PC-9 (cell line): ENCODE measurements at regions of chr6 and their contacts with region 1.

Region 1: DNA sequence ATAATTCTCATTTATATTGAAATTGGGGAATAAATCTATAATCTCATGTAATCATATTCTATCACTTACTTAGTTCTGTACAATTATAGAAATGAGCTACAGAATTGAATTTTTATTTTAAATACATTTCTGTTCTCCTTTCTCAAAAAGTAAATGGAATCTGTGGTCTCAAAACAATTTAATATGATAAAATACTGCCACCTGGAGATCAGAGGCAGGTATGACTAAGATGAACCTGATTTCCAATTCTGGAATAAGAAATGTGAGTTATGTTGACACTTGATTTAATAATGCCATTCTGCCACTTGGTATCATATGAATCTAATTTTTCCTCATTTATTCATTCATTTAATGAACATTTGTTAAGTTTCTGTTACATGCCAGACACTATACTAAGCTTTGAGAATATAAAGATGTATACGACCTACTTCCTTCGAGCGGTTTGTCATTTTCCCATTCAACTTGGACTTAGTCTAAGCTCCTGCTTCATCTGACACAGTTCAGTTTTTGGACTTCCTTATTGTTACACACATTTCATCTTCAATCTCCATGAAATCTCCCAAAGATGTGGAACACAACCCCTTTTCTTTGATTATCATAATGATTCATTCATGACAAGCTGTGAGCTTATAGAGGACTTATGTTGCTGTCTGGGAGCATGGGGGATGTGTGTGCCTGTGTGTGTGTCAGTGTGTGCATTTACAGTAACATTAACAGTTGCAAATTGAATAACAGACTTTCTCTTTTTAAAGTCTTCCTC is 7.5 kb upstream of the CCDC28A start:
- DNase-seq: peak in 1 of 2 experiments; percentile 60
- H3K4me3 ChIP-seq: no peak overlapping the region
- H3K27ac ChIP-seq: no peak overlapping the region
- H3K4me1 ChIP-seq: no peaks in the 10 kb centered on the region
- H3K27me3 ChIP-seq: no peaks in the 10 kb centered on the region
- CTCF ChIP-seq: peak; percentile 95

Region 2: DNA sequence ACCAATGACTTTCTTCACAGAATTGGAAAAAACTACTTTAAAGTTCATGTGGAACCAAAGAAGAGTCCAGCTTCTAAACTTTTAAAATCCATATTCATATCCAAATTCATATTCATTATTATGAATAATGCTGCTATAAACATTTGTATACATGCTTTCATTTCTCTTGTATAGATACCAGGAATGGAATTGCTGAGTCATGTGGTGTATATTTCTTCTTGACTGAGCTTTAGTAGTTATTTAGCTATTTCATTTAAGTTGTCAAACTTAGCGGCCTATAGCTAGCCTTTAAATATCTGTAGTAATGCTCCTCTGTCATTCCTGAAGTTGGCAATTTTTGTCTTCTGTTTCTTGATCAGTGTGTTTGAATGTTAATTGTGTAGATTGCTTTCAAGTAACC is 408.1 kb before region 1 on chr6:
- CTCF ChIA-PET with region 1: no interaction called
- POLR2A ChIA-PET with region 1: no interaction called
- intact Hi-C with region 1: no loop called
- DNase-seq: no peak
- H3K4me3 ChIP-seq: no peak overlapping the region
- H3K27ac ChIP-seq: no peak overlapping the region
- H3K4me1 ChIP-seq: 0 out of 2 replicates have a peak, but pooled peaks cover 4% of the 10 kb centered on the region
- H3K27me3 ChIP-seq: no peaks in the 10 kb centered on the region
- CTCF ChIP-seq: no peak

Region 3: DNA sequence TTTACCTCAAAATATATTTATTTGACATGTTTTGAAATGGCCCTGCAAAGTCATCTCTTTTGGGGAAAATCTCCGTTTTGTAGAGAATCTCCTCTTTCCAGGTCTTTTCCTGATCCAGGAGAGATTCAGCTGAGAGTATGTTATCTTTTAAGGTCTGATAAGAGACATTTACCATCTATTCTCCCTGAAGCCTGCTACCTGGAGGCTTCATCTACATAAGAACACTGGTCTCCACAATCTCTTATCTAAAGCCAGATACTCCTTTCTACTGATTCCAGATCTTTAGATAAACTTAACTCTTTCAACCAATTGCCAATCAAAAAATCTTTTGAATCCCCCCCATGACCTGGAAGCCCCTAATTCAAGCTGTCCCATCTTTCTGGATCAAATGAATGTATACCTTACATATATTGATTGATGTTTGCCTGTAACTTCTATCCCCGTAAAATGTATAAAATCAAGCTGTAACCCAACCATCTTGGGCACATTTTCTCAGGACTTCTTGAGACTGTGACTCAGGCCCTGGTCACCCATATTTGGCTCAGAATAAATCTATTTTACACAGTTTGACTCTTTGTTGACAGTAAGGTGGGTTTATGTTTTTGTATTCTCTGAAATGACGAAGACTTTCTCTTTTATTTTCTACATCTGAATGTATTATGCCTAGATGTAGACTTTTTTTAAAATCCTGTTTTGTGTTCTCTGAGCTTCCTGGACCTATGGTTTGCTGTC is 125.3 kb after region 1 on chr6:
- CTCF ChIA-PET with region 1: no interaction called
- POLR2A ChIA-PET with region 1: interaction called, 21 read pairs
- intact Hi-C with region 1: no loop called
- DNase-seq: no peak
- H3K4me3 ChIP-seq: no peak overlapping the region
- H3K27ac ChIP-seq: no peak overlapping the region
- H3K4me1 ChIP-seq: no peaks in the 10 kb centered on the region; the same call in none of the 2 replicates
- H3K27me3 ChIP-seq: no peaks in the 10 kb centered on the region
- CTCF ChIP-seq: no peak